HCT116 (cell line): ENCODE measurements at regions of chr9 and their contacts with region 1.

Region 1: GRCh38 chr9:74773886-74774479 is 113.7 kb downstream of the TRPM6 start:
- DNase-seq: peak; percentile 67
- ATAC-seq: peak; percentile 70
- H3K4me3 ChIP-seq: no peak overlapping the region
- H3K27ac ChIP-seq: no peak overlapping the region
- H3K4me1 ChIP-seq: peaks cover 0 to 6% of the 10 kb centered on the region in 2 experiments; a peak in 2 of 4 replicates
- H3K27me3 ChIP-seq: no peaks in the 10 kb centered on the region
- CTCF ChIP-seq: peak; percentile 77 to 96 (median 78)
- POLR2A ChIP-seq: no peak
- RAD21 ChIP-seq: peak; percentile 92

Region 2: GRCh38 chr9:75001719-75002422 is 227.9 kb after region 1 on chr9:
- CTCF ChIA-PET with region 1: interaction called, 10 read pairs
- POLR2A ChIA-PET with region 1: no interaction called
- RAD21 ChIA-PET with region 1: no interaction called
- intact Hi-C with region 1: loop called (anchors 1 kb)
- DNase-seq: peak; percentile 74
- ATAC-seq: peak; percentile 95
- H3K4me3 ChIP-seq: no peak overlapping the region
- H3K27ac ChIP-seq: no peak overlapping the region
- H3K4me1 ChIP-seq: no peaks in the 10 kb centered on the region
- H3K27me3 ChIP-seq: no peaks in the 10 kb centered on the region
- CTCF ChIP-seq: peak; percentile 65 to 81 (median 67)
- POLR2A ChIP-seq: no peak
- RAD21 ChIP-seq: peak; percentile 74

Region 3: DNA sequence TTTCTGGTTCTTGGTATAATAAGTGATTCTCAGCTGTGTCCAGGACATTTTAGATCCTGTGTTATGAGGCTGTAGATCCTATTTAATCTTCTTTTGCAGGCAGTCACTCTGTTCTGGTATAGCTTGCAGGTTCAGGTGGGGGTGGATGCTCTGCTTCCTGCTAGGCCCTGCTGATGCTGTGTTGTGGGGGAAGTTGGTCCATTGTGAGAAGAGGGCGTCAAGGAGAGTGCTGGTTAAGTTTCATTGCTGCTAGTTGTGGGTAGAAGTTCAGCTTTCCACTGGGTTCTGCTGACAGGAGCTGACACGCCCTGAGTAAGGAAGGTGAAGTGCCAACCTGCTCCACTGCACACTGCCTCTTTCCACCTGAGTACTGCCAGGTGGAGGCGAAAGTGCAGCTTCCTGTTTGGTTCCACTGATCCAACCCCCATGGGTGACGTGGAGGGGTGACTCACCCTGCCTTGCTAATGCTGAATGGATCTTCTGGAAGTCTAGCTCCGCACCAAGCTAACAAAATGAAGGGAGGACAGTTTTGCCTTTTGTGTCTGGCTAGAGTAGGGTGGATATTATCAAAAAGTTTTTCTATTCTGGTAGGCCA is 297.6 kb after region 1 on chr9:
- CTCF ChIA-PET with region 1: interaction called, 25 read pairs
- POLR2A ChIA-PET with region 1: no interaction called
- RAD21 ChIA-PET with region 1: interaction called, 3 read pairs
- intact Hi-C with region 1: no loop called
- DNase-seq: peak; percentile 44
- ATAC-seq: peak; percentile 96
- H3K4me3 ChIP-seq: no peak overlapping the region
- H3K27ac ChIP-seq: no peak overlapping the region
- H3K4me1 ChIP-seq: peaks cover 4 to 11% of the 10 kb centered on the region in 2 experiments; a peak in 3 of 4 replicates
- H3K27me3 ChIP-seq: no peaks in the 10 kb centered on the region
- CTCF ChIP-seq: no peak
- POLR2A ChIP-seq: no peak
- RAD21 ChIP-seq: no peak

Region 4: GRCh38 chr9:75185585-75186170 is 411.7 kb after region 1 on chr9:
- CTCF ChIA-PET with region 1: interaction called, 4 read pairs
- POLR2A ChIA-PET with region 1: no interaction called
- RAD21 ChIA-PET with region 1: interaction called in 1 of 2 experiments, 3 read pairs
- intact Hi-C with region 1: loop called (anchors 1 kb)
- DNase-seq: peak; percentile 38
- ATAC-seq: peak; percentile 85
- H3K4me3 ChIP-seq: no peak overlapping the region
- H3K27ac ChIP-seq: no peak overlapping the region
- H3K4me1 ChIP-seq: peaks cover 6 to 14% of the 10 kb centered on the region in 2 experiments; a peak in 2 of 4 replicates
- H3K27me3 ChIP-seq: no peaks in the 10 kb centered on the region
- CTCF ChIP-seq: peak; percentile 36 to 85 (median 78); a peak in 5 of 6 replicates
- POLR2A ChIP-seq: no peak
- RAD21 ChIP-seq: no peak; the same call in 1 of the 2 replicates